Aorta (tissue), 5 donors: ENCODE measurements at regions of chr7 and their contacts with region 1.

Region 1: DNA sequence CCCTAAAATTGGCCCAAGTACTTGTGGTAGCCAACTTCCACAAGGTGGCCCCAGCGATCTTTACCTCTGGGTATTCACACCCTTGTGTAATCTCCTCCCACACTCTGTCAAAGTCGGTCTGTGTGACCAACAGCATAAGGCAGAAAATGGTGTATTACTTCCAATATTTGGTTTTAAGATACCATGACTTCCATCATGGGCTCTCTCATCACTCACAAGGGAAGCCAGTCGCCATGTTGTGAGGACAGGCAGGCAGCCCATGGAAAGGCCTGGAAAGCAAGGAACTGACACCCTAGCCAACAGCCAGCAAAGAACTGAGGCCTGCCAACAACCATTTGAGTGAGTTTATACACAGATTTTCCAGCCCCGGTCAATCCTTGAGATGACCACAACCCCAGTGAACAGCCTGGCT is 91.0 kb upstream of the KMT2E start:
- DNase-seq: peak; percentile 82 to 85
- ATAC-seq: peak; percentile 90
- H3K4me3 ChIP-seq: no peak overlapping the region
- H3K27ac ChIP-seq: peak overlapping the region in 1 of 2 donors; percentile 52
- H3K4me1 ChIP-seq: no peaks in the 10 kb centered on the region
- H3K27me3 ChIP-seq: no peaks in the 10 kb centered on the region

Region 2: GRCh38 chr7:104225451-104225850 is 697.6 kb before region 1 on chr7:
- intact Hi-C with region 1: loop called (anchors 5 kb)
- DNase-seq: no peak
- ATAC-seq: no peak
- H3K4me3 ChIP-seq: no peak overlapping the region
- H3K27ac ChIP-seq: no peak overlapping the region
- H3K4me1 ChIP-seq: no peaks in the 10 kb centered on the region
- H3K27me3 ChIP-seq: no peaks in the 10 kb centered on the region

Region 3: GRCh38 chr7:104231054-104232046 is 691.7 kb before region 1 on chr7:
- intact Hi-C with region 1: loop called (anchors 5 kb)
- DNase-seq: peak; percentile 43 to 74
- ATAC-seq: peak; percentile 86
- H3K4me3 ChIP-seq: no peak overlapping the region
- H3K27ac ChIP-seq: no peak overlapping the region
- H3K4me1 ChIP-seq: no peaks in the 10 kb centered on the region
- H3K27me3 ChIP-seq: no peaks in the 10 kb centered on the region

Region 4: DNA sequence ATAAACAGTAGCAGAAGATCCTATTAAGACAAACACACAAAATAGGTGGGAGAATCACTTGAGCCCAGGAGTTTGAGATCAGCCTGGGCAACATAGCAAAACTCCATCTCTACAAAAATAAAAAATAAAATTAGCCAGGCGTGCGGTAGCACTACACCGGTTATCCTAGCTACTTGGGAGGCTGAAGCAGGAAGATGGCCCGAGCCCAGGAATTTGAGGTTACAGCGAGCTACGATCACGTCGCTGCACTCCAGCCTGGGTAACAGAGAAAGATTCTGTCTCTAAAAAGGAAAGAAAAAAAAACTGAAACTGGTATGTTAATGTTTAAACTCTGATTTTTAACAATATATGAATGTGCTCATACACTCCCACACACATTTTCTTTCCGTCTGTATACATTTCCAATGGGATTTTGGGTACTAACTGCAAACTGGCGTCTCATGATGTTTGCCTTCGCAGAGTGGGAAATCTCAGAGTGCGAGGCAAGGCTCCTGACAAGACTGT is 49.6 kb before region 1 on chr7:
- intact Hi-C with region 1: no loop called
- DNase-seq: no peak
- ATAC-seq: no peak
- H3K4me3 ChIP-seq: no peak overlapping the region
- H3K27ac ChIP-seq: no peak overlapping the region
- H3K4me1 ChIP-seq: no peaks in the 10 kb centered on the region
- H3K27me3 ChIP-seq: no peaks in the 10 kb centered on the region

Region 5: GRCh38 chr7:104883718-104884452 is 39.1 kb before region 1 on chr7:
- intact Hi-C with region 1: loop called in 1 of 2 experiments (anchors 5 kb)
- DNase-seq: peak; percentile 93 to 96
- ATAC-seq: peak; percentile 94
- H3K4me3 ChIP-seq: peak overlapping the region in 1 of 2 donors; percentile 32
- H3K27ac ChIP-seq: peak overlapping the region; percentile 73 to 93
- H3K4me1 ChIP-seq: no peaks in the 10 kb centered on the region
- H3K27me3 ChIP-seq: no peaks in the 10 kb centered on the region

Region 6: GRCh38 chr7:105084581-105084980 is 161.6 kb after region 1 on chr7:
- intact Hi-C with region 1: no loop called
- DNase-seq: no peak
- ATAC-seq: no peak
- H3K4me3 ChIP-seq: no peak overlapping the region
- H3K27ac ChIP-seq: no peak overlapping the region
- H3K4me1 ChIP-seq: no peaks in the 10 kb centered on the region
- H3K27me3 ChIP-seq: no peaks in the 10 kb centered on the region